Activated CD8-positive, alpha-beta T cell treated with anti-CD3 and anti-CD28 coated beads, Interleukin-2, amount 10 ng/mL, durations not matched to agents 7 days and 5 days (primary cell): ENCODE measurements at regions of chr1 and their contacts with region 1.

Region 1: DNA sequence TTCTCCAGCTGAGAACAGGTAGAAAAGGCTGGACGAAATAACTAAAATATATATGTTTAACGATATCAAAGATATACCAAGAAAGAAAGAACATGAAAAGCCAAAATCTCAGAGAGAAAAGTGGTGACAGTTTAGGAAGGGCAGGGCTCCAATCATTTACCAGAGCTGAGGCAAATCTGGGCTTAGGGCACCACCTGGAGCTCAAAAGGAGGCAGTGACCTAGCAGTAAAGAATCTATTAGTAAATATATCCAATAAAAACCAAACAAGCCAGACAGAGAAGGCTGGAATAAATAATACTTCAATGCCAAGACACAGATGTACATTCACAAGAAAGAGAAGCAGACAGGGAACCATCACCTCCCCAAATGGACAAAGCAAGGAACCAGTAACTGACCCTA is 43.5 kb downstream of the CHIA start:
- DNase-seq: peak; percentile 66
- ATAC-seq: peak; percentile 76
- H3K4me3 Mint-ChIP-seq: no peak overlapping the region
- H3K27ac Mint-ChIP-seq: no peak overlapping the region
- H3K4me1 Mint-ChIP-seq: peaks cover 2% of the 10 kb centered on the region
- H3K27me3 Mint-ChIP-seq: peaks cover 2% of the 10 kb centered on the region

Region 2: DNA sequence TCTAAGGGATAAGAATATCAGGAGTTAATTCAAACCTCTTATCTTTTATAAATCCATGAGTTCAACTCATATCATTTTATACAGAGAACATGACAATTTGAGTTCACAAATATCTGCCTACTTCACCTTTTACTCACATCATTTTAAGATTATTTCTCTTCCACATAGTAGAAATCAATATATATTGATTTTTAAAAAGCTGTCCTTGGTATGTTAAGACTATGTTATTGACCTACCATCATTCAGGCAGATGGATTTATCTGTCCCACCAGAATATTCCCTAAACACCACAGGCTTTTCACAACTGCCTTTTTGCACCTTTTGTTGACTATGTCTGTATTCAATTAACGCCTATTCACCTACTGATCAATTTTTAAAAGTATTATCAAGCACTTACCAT is 207.8 kb before region 1 on chr1:
- CTCF ChIA-PET with region 1: no interaction called
- POLR2A ChIA-PET with region 1: no interaction called
- DNase-seq: no peak
- ATAC-seq: no peak
- H3K4me3 Mint-ChIP-seq: no peak overlapping the region
- H3K27ac Mint-ChIP-seq: no peak overlapping the region
- H3K4me1 Mint-ChIP-seq: peaks cover 18% of the 10 kb centered on the region
- H3K27me3 Mint-ChIP-seq: no peaks in the 10 kb centered on the region

Region 3: DNA sequence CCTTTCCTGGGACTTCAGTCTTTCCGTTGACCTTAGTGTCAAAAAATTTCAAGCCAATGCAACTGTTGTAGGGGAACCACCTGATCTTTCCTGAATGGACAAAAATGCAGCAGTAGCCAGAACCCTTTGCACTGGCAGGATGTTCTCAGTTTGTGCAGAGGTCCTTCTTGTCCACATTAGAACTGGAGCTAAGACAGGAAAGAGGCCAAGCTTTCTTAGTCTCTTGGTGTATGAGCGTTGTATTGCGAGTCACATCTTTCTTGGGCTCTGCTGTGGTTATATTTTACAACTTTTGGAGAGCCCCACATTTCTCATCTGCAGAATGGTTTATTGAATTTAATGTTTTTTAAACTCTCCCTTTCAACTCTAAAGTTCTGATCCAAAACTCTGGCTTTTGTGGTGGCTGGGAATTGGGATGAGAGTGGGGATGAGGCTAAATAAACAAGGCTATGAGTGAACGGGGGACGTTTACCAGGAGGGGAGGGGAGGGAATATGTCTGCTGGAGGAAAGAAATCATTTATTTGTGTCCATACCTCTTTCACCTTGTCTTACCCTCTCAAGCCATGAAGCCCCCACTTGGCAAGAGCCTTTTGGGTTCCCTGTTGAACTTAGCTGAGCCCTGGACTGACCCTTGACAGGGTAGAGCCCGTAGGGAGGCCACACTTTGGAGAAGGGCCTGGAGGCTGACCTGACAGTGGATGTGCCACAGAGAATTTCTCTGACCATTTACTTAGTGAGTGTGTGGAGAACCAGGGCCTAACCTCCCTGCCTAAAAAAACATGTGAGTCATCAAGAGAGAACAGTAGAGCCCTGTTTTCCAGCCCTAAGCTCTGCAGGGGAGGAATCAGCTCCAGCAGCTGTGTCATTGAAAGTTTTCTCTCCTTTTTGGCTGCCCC is 106.1 kb before region 1 on chr1:
- CTCF ChIA-PET with region 1: interaction called, 19 read pairs
- POLR2A ChIA-PET with region 1: no interaction called
- DNase-seq: no peak
- ATAC-seq: no peak
- H3K4me3 Mint-ChIP-seq: peak overlapping the region; percentile 16
- H3K27ac Mint-ChIP-seq: peak overlapping the region; percentile 72
- H3K4me1 Mint-ChIP-seq: peaks cover 79% of the 10 kb centered on the region
- H3K27me3 Mint-ChIP-seq: no peaks in the 10 kb centered on the region

Region 4: GRCh38 chr1:111242805-111243523 is 91.2 kb before region 1 on chr1:
- CTCF ChIA-PET with region 1: no interaction called
- POLR2A ChIA-PET with region 1: no interaction called
- DNase-seq: no peak
- ATAC-seq: no peak
- H3K4me3 Mint-ChIP-seq: no peak overlapping the region
- H3K27ac Mint-ChIP-seq: no peak overlapping the region
- H3K4me1 Mint-ChIP-seq: no peaks in the 10 kb centered on the region
- H3K27me3 Mint-ChIP-seq: no peaks in the 10 kb centered on the region

Region 5: DNA sequence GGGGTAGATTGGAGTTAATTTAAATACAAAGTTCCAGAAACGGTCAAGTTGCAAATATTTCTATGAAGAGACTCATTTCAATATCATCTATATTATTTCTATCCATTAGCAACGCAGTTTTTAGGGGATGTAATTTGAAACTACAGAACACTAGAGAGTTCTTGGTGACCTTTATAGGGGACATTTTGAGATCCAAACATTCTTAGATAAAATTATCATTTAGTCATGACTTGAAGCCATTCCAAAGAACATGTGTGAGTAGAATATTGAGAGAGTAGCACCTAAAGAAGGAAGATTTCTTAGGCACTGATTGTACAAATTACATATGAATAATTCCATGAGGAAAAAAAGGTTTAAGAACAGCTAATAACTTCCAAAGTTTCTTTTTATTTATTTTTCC is 24.5 kb before region 1 on chr1:
- CTCF ChIA-PET with region 1: no interaction called
- POLR2A ChIA-PET with region 1: no interaction called
- DNase-seq: no peak
- ATAC-seq: no peak
- H3K4me3 Mint-ChIP-seq: no peak overlapping the region
- H3K27ac Mint-ChIP-seq: no peak overlapping the region
- H3K4me1 Mint-ChIP-seq: no peaks in the 10 kb centered on the region
- H3K27me3 Mint-ChIP-seq: peaks cover 12% of the 10 kb centered on the region

Region 6: DNA sequence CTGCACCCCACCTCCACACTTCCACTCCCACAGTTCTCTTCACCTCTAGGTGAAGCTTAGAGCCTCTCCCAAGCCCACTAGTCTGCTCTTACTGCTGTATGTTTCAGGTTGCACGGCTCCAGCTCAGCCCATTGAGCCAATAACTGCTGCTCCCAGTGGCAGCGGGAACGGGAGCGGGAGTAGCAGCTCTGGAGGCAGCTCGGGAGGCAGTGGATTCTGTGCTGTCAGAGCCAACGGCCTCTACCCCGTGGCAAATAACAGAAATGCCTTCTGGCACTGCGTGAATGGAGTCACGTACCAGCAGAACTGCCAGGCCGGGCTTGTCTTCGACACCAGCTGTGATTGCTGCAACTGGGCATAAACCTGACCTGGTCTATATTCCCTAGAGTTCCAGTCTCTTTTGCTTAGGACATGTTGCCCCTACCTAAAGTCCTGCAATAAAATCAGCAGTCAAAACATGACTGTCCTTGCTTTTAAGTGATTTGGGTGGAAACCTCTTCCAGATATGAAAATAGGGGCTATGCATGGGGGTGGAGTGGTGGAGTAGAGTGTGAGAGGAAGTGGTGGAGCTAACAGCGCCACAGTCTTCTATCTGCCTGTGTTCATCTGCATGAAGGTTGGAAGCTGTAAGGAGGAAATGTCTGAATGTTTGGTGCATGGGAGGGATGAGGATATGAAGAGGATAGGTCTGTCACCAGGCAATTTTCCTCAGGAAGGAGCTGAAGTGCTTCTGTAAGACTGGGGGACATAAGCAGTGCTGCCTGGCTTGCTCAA is 13.9 kb before region 1 on chr1:
- CTCF ChIA-PET with region 1: interaction called, 13 read pairs
- POLR2A ChIA-PET with region 1: no interaction called
- DNase-seq: no peak
- ATAC-seq: no peak
- H3K4me3 Mint-ChIP-seq: no peak overlapping the region
- H3K27ac Mint-ChIP-seq: peak overlapping the region; percentile 7
- H3K4me1 Mint-ChIP-seq: peaks cover 7% of the 10 kb centered on the region
- H3K27me3 Mint-ChIP-seq: no peaks in the 10 kb centered on the region

Region 7: DNA sequence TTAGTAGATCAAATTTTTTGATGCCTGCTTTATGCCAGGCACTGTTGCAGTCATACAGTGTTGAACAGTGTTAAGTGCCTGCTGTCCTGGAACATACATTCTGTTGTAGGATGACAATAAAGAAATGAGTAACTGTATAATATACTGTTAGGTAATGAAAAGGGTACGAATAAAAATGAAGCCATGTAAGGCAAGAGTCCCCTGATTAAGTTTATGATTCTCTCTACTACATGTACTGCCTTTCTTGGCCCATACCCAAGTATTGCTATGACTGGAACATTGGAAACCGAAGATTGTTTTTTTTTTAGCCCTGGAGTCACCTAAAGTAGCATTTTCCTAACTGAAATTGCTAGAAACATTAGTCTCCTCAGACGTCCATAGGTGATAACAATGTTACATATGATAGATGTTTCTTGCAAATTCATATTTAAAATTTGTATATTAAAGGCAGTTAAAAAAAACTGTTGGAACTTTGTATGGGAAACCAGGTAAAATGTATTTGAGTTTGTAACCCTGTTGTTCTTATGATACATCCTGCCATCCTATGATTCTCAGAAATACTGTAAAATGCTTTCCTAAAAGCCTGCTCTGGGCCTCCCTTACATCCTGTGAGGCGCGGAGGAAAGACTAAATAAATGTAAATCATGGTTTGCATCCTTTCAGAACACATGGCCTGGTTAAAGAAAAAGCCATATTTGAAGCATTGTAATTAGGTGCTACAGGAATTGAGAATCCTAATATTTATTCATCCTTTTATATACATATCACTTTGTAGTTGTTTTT is 120.9 kb after region 1 on chr1:
- CTCF ChIA-PET with region 1: no interaction called
- POLR2A ChIA-PET with region 1: no interaction called
- DNase-seq: peak; percentile 39
- ATAC-seq: peak; percentile 39
- H3K4me3 Mint-ChIP-seq: peak overlapping the region; percentile 66
- H3K27ac Mint-ChIP-seq: peak overlapping the region; percentile 91
- H3K4me1 Mint-ChIP-seq: peaks cover 71% of the 10 kb centered on the region
- H3K27me3 Mint-ChIP-seq: no peaks in the 10 kb centered on the region